Activated CD4-positive, alpha-beta memory T cell treated with anti-CD3 and anti-CD28 coated beads for 36 hours (primary cell): ENCODE measurements at regions of chr11 and their contacts with region 1.

Region 1: DNA sequence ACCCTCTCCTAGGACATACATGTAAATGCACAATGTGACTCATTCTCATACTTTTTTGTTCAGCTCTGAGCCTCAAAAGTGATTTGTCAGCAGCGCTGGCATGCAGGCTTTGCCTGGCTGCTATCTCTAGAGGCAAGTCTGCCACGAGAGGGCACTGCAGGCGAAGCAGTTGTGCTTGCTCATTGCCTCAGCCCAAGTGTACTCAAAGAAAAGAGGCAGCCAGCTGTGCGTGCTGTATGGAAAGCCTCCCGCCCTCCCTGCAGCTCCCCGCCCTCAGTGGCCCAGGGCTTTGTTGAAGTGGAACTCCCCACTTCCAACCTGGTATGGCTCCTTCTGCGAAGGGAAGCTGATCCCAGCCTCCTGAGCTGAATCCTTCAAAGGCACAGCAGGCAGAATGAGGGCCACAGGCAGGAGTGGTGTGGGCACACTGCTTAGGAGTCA is 16.3 kb downstream of the SDHAF2 start:
- DNase-seq: peak; percentile 92
- H3K4me3 Mint-ChIP-seq: no peak overlapping the region
- H3K27ac Mint-ChIP-seq: peak overlapping the region; percentile 74
- H3K4me1 Mint-ChIP-seq: peaks cover 44% of the 10 kb centered on the region
- H3K27me3 Mint-ChIP-seq: no peaks in the 10 kb centered on the region

Region 2: GRCh38 chr11:61460474-61460881 is 14.2 kb after region 1 on chr11:
- CTCF ChIA-PET with region 1: interaction called, 18 read pairs
- POLR2A ChIA-PET with region 1: interaction called, 4 read pairs
- intact Hi-C with region 1: loop called (anchors 1 kb)
- DNase-seq: no peak
- H3K4me3 Mint-ChIP-seq: no peak overlapping the region
- H3K27ac Mint-ChIP-seq: no peak overlapping the region
- H3K4me1 Mint-ChIP-seq: no peaks in the 10 kb centered on the region
- H3K27me3 Mint-ChIP-seq: no peaks in the 10 kb centered on the region

Region 3: GRCh38 chr11:61477727-61478148 is 31.5 kb after region 1 on chr11:
- CTCF ChIA-PET with region 1: interaction called, 47 read pairs
- POLR2A ChIA-PET with region 1: no interaction called
- intact Hi-C with region 1: no loop called
- DNase-seq: peak; percentile 59
- H3K4me3 Mint-ChIP-seq: no peak overlapping the region
- H3K27ac Mint-ChIP-seq: no peak overlapping the region
- H3K4me1 Mint-ChIP-seq: peaks cover 9% of the 10 kb centered on the region
- H3K27me3 Mint-ChIP-seq: peaks cover 1% of the 10 kb centered on the region

Region 4: DNA sequence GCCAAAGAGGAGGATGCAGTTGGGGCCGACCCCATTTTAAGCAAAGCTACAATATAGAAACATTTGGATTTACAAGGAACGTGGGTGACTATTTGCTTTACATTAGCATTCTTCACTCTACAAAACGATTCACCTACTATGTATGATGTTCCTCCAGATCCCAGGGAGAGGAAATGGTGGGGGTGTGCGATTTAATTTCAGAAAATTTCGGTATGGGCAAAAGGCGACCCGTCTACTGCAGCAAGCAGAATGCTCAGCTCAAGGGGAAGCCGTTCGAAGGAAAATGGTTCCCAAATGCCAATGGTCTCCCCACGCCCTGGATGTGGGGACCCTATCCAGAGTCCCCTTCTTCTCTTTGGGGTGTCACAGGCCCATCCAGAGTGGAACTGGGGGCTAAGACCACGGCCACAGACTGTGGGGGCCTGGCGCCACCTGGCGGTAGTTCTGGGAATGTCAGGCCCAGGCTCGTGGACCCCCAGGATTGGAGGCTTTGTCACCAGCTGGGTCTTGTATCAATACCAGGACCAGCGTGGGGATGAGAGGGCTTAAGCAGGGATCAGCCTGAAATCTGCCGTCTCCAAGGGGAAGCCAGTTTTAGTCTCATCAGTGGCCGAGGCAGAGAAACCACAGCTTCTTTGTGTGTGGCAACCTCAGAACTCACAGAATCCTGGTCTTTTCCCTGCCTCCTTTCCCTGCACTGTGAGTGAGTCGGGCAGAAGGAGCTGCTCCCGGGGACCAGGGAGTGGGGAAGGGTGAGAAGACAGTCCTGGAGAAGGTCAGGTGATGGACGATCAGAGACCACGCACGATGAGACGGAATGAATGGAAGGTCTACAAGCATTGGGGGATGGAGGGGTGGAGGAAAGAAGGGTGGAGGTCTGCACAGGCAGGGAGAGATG is 70.7 kb after region 1 on chr11:
- CTCF ChIA-PET with region 1: interaction called, 101 read pairs
- POLR2A ChIA-PET with region 1: interaction called, 4 read pairs
- intact Hi-C with region 1: loop called (anchors 1 kb)
- DNase-seq: peak; percentile 60
- H3K4me3 Mint-ChIP-seq: peak overlapping the region; percentile 24
- H3K27ac Mint-ChIP-seq: no peak overlapping the region
- H3K4me1 Mint-ChIP-seq: peaks cover 7% of the 10 kb centered on the region
- H3K27me3 Mint-ChIP-seq: peaks cover 18% of the 10 kb centered on the region

Region 5: DNA sequence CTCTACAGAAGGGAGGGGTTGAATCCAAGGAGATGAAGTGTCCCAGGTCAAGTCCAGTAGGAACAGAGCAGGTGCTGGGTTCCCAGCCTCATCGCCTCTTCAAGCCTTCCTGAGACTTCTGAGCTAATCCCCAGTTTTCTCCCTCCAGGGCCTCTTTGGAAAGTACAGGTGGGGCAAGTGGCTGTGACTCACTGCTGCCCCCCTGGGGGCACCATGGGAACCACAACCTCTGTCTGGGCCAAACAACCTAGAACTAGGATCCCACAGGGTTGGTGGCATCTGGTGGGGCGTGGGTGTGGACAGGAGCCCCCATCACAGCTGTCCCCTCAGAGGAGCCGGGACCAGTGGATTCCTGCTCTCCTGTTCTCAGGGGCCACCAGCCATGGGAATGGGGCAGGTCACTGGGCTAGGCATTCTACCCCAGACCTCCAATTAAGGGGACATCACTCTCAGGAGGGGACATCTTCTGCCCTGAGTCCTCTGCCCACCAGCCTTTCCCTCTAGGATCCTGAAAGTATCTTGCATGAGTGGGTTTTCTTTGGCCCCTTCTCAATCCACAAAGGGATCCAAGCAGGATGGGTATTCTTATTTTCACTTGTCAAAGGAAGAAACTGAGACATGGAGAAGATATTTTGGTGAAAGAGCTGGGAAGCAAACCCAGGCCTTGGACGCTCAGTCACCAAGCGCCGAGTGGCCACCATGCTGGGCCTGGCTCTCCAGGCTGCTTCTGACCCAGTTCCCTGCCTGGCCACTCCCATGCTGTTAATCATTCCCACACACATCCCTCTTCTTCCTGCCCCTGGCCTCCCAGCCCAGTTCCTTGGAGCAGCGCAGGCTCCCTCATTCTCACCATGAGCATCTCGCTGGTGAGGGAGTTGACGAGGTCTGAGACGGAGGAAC is 86.2 kb after region 1 on chr11:
- CTCF ChIA-PET with region 1: interaction called, 11 read pairs
- POLR2A ChIA-PET with region 1: no interaction called
- intact Hi-C with region 1: no loop called
- DNase-seq: peak; percentile 57
- H3K4me3 Mint-ChIP-seq: no peak overlapping the region
- H3K27ac Mint-ChIP-seq: no peak overlapping the region
- H3K4me1 Mint-ChIP-seq: no peaks in the 10 kb centered on the region
- H3K27me3 Mint-ChIP-seq: peaks cover 15% of the 10 kb centered on the region